IMR-90 (cell line): ENCODE measurements at regions of chr6 and their contacts with region 1.

Region 1: DNA sequence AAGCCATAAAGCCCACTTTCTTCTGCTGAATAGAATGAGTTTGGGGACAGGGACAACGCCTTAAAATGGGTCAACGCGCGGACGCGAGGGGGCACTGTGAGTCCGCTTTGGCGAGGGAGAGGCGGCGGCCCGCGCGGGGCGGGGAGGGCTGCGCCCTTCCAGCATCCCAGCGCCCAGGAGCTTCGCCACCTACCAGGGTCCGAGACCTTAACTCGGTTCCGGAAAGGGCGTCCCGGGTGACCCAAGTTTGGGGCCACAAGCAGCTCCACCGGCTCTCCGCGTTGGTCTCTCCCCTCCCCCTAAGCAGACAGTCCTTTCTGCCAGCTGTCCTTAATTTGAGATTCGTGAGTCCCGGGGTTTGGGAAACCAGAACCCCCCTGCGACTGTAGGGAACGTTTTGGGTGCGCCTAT is 1.8 kb upstream of the SAMD5 start:
- DNase-seq: peak; percentile 45
- ATAC-seq: peak; percentile 33
- H3K4me3 ChIP-seq: peak overlapping the region; percentile 68
- H3K27ac ChIP-seq: no peak overlapping the region
- H3K4me1 ChIP-seq: peaks cover 3% of the 10 kb centered on the region; the same call in 1 of the 2 replicates
- H3K27me3 ChIP-seq: peaks cover 8% of the 10 kb centered on the region; the same call in 1 of the 2 replicates
- CTCF ChIP-seq: peak; percentile 90
- POLR2A ChIP-seq: no peak
- RAD21 ChIP-seq: peak; percentile 96

Region 2: DNA sequence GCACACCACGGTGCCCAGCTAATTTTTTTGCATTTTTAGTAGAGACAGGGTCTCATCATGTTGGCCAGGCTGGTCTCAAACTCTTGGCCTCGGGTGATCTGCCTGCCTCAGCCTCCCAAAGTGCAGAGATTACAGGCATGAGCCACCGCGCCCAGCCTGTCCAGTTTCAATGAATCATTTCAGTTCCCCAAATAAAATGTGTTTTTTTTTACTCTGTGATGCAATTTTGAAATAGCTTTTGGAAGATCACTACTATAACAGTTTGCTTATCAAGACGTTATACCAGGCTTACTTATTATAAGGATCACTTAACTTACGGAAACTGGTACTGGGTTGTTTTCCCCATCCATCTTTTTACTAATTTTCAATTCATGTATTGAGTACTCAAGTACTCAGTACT is 81.8 kb after region 1 on chr6:
- CTCF ChIA-PET with region 1: no interaction called
- POLR2A ChIA-PET with region 1: no interaction called
- dilution Hi-C with region 1: no loop called
- in situ Hi-C with region 1: no loop called
- intact Hi-C with region 1: no loop called
- DNase-seq: no peak
- ATAC-seq: no peak
- H3K4me3 ChIP-seq: no peak overlapping the region
- H3K27ac ChIP-seq: no peak overlapping the region
- H3K4me1 ChIP-seq: no peaks in the 10 kb centered on the region
- H3K27me3 ChIP-seq: no peaks in the 10 kb centered on the region
- CTCF ChIP-seq: no peak
- POLR2A ChIP-seq: no peak
- RAD21 ChIP-seq: no peak

Region 3: DNA sequence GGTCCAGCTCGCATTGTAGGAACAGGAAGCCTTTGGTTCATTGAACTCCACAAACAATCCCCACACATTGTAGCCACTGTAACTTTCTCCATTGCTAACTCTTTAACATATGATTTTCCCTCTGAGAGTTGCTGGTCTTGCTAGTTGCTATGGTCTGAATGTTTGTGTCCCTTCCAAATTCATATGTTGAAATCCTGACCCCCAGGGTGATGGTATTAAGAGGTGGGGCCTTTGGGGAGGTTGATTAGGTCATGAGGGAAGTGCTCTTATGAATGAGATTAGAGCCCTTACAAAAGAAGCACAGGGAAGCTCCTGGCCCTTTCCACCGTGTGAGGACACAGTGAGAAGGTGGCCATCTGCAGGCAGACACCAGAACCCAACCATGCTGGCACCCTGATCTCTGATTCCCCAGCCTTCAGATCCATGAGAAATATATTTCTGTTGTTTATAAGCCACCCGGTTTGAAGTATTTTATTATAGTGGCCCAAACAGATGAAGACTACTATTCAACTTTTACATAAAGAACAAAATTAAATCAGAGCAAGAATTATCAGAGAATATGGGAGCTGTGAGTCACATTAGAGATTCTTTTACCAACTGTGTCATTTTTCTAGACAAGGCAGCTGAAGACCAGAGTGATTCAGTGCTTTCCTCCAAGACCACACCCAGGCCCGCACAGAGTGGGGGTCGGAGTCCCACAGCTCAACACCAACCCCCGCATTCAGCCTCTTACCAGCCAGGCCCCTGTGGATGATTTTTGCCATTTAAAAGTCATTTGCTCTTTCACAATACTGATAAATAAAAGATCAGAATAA is 144.7 kb after region 1 on chr6:
- CTCF ChIA-PET with region 1: interaction called, 4 read pairs
- POLR2A ChIA-PET with region 1: no interaction called
- dilution Hi-C with region 1: no loop called
- in situ Hi-C with region 1: no loop called
- intact Hi-C with region 1: loop called (anchors 1 kb)
- DNase-seq: peak; percentile 51
- ATAC-seq: peak; percentile 38
- H3K4me3 ChIP-seq: no peak overlapping the region
- H3K27ac ChIP-seq: peak overlapping the region; percentile 21; the same call in 1 of the 2 replicates
- H3K4me1 ChIP-seq: peaks cover 17% of the 10 kb centered on the region
- H3K27me3 ChIP-seq: no peaks in the 10 kb centered on the region
- CTCF ChIP-seq: no peak
- POLR2A ChIP-seq: no peak
- RAD21 ChIP-seq: no peak

Region 4: GRCh38 chr6:147970975-147971374 is 464.3 kb after region 1 on chr6:
- CTCF ChIA-PET with region 1: interaction called, 4 read pairs
- POLR2A ChIA-PET with region 1: no interaction called
- dilution Hi-C with region 1: no loop called
- in situ Hi-C with region 1: no loop called
- intact Hi-C with region 1: loop called (anchors 2 kb)
- DNase-seq: peak; percentile 5
- ATAC-seq: no peak
- H3K4me3 ChIP-seq: no peak overlapping the region
- H3K27ac ChIP-seq: no peak overlapping the region
- H3K4me1 ChIP-seq: no peaks in the 10 kb centered on the region
- H3K27me3 ChIP-seq: no peaks in the 10 kb centered on the region; the same call in 1 of the 2 replicates
- CTCF ChIP-seq: peak; percentile 18; the same call in 1 of the 2 replicates
- POLR2A ChIP-seq: no peak
- RAD21 ChIP-seq: peak; percentile 44

Region 5: GRCh38 chr6:148166339-148166968 is 659.7 kb after region 1 on chr6:
- CTCF ChIA-PET with region 1: interaction called, 30 read pairs
- POLR2A ChIA-PET with region 1: no interaction called
- dilution Hi-C with region 1: no loop called
- in situ Hi-C with region 1: loop called (anchors 5 kb)
- intact Hi-C with region 1: loop called (anchors 1 kb)
- DNase-seq: peak; percentile 72
- ATAC-seq: peak; percentile 75
- H3K4me3 ChIP-seq: no peak overlapping the region
- H3K27ac ChIP-seq: no peak overlapping the region
- H3K4me1 ChIP-seq: no peaks in the 10 kb centered on the region
- H3K27me3 ChIP-seq: no peaks in the 10 kb centered on the region; the same call in 1 of the 2 replicates
- CTCF ChIP-seq: peak; percentile 71
- POLR2A ChIP-seq: no peak
- RAD21 ChIP-seq: peak; percentile 72

Region 6: GRCh38 chr6:148464319-148465010 is 957.8 kb after region 1 on chr6:
- CTCF ChIA-PET with region 1: no interaction called
- POLR2A ChIA-PET with region 1: no interaction called
- dilution Hi-C with region 1: no loop called
- in situ Hi-C with region 1: loop called (anchors 10 kb)
- intact Hi-C with region 1: loop called (anchors 2 kb)
- DNase-seq: peak; percentile 79
- ATAC-seq: peak; percentile 59
- H3K4me3 ChIP-seq: no peak overlapping the region
- H3K27ac ChIP-seq: peak overlapping the region; percentile 5; the same call in 1 of the 2 replicates
- H3K4me1 ChIP-seq: peaks cover 19% of the 10 kb centered on the region
- H3K27me3 ChIP-seq: no peaks in the 10 kb centered on the region
- CTCF ChIP-seq: peak; percentile 98
- POLR2A ChIP-seq: no peak
- RAD21 ChIP-seq: peak; percentile 91